CD8-positive, alpha-beta T cell (primary cell): ENCODE measurements at regions of chr1 and their contacts with region 1.

Region 1: GRCh38 chr1:109603233-109603632 is 16.2 kb downstream of the GNAT2 start:
- DNase-seq: peak in 1 of 9 experiments; percentile 9
- ATAC-seq: peak; percentile 23
- H3K4me3 ChIP-seq: no peak overlapping the region
- H3K4me3 Mint-ChIP-seq: no peak overlapping the region
- H3K27ac ChIP-seq: no peak overlapping the region
- H3K27ac Mint-ChIP-seq: no peak overlapping the region
- H3K4me1 ChIP-seq: peaks cover 12% of the 10 kb centered on the region
- H3K4me1 Mint-ChIP-seq: peaks cover 18% of the 10 kb centered on the region
- H3K27me3 ChIP-seq: no peaks in the 10 kb centered on the region
- H3K27me3 Mint-ChIP-seq: no peaks in the 10 kb centered on the region
- CTCF ChIP-seq: no peak

Region 2: DNA sequence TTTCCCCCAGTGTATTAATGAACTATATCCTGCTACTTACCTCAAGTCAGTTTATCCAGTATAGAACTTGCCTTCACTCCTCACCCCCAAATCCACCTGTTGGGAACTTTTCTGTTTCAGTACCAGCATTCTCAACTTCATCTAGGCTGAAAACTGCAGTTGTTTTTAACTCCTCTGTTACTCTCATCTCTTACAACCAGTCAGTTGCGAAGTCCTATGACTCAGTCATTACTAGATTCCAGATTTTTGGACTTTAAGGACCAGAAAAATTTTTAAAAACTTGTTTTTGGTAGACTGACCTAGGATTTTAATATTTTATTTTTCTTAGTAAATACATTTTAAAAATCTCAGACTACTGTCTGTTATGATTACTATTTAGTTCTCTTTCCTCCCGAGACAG is 46.7 kb before region 1 on chr1:
- CTCF ChIA-PET with region 1: interaction called, 7 read pairs
- POLR2A ChIA-PET with region 1: no interaction called
- intact Hi-C with region 1: loop called in 1 of 2 experiments (anchors 5 kb)
- DNase-seq: no peak
- ATAC-seq: no peak
- H3K4me3 ChIP-seq: no peak overlapping the region
- H3K4me3 Mint-ChIP-seq: no peak overlapping the region
- H3K27ac ChIP-seq: no peak overlapping the region
- H3K27ac Mint-ChIP-seq: no peak overlapping the region
- H3K4me1 ChIP-seq: peaks cover 28% of the 10 kb centered on the region
- H3K4me1 Mint-ChIP-seq: peaks cover 79% of the 10 kb centered on the region
- H3K27me3 ChIP-seq: no peaks in the 10 kb centered on the region
- H3K27me3 Mint-ChIP-seq: no peaks in the 10 kb centered on the region
- CTCF ChIP-seq: no peak

Region 3: GRCh38 chr1:109589177-109589576 is 14.1 kb before region 1 on chr1:
- CTCF ChIA-PET with region 1: no interaction called
- POLR2A ChIA-PET with region 1: no interaction called
- intact Hi-C with region 1: no loop called
- DNase-seq: no peak
- ATAC-seq: no peak
- H3K4me3 ChIP-seq: no peak overlapping the region
- H3K4me3 Mint-ChIP-seq: no peak overlapping the region
- H3K27ac ChIP-seq: no peak overlapping the region
- H3K27ac Mint-ChIP-seq: peak overlapping the region; percentile 61
- H3K4me1 ChIP-seq: no peaks in the 10 kb centered on the region
- H3K4me1 Mint-ChIP-seq: no peaks in the 10 kb centered on the region
- H3K27me3 ChIP-seq: no peaks in the 10 kb centered on the region
- H3K27me3 Mint-ChIP-seq: no peaks in the 10 kb centered on the region
- CTCF ChIP-seq: no peak

Region 4: DNA sequence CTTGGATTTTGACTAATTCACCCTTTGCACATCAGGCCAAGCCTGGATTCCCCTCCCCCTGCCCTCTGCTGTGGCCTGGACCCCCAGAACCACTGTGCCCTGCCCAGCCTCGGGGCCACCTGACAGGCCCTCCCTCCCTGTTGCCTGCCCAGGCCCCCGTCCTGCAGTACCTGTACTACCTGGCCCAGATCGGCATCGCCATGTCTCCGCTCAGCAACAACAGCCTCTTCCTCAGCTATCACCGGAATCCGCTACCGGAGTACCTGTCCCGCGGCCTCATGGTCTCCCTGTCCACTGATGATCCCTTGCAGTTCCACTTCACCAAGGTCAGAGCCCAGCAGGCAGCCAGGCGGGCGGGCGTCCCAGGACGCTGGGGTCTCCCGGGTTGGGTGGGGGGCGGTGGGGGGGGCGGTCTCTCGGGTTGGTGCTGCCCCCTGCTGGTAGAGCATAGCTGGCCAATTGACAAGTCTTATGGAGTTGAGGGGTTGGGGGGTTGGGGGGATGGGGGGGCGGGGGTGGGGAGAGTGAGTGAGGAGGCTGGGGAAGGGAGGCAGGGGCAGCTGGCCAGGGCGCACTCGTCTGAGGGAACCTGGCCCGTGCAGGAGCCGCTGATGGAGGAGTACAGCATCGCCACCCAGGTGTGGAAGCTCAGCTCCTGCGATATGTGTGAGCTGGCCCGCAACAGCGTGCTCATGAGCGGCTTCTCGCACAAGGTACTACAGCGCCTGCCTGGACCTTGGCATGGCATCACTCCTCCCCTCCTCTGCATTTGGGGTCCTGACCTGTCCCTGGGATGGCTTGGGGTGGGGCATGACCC is 27.1 kb after region 1 on chr1:
- CTCF ChIA-PET with region 1: interaction called, 10 read pairs
- POLR2A ChIA-PET with region 1: interaction called, 3 read pairs
- intact Hi-C with region 1: no loop called
- DNase-seq: peak in 7 of 9 experiments; percentile 45 to 69 (median 55)
- ATAC-seq: peak; percentile 61
- H3K4me3 ChIP-seq: no peak overlapping the region
- H3K4me3 Mint-ChIP-seq: no peak overlapping the region
- H3K27ac ChIP-seq: no peak overlapping the region
- H3K27ac Mint-ChIP-seq: no peak overlapping the region
- H3K4me1 ChIP-seq: peaks cover 12% of the 10 kb centered on the region
- H3K4me1 Mint-ChIP-seq: peaks cover 12% of the 10 kb centered on the region
- H3K27me3 ChIP-seq: no peaks in the 10 kb centered on the region
- H3K27me3 Mint-ChIP-seq: no peaks in the 10 kb centered on the region
- CTCF ChIP-seq: peak; percentile 28